ENCODE measurements at regions of chr21 and their contacts with region 1.

Region 1: GRCh38 chr21:17679002-17679600 is 66.4 kb upstream of the BTG3 start:
- DNase-seq: peak; percentile 37
- H3K4me3 ChIP-seq: no peak overlapping the region
- H3K27ac ChIP-seq: no peak overlapping the region
- H3K4me1 ChIP-seq: no peaks in the 10 kb centered on the region
- H3K27me3 ChIP-seq: no peaks in the 10 kb centered on the region
- CTCF ChIP-seq: peak; percentile 35 to 94 (median 86)
- POLR2A ChIP-seq: no peak

Region 2: GRCh38 chr21:17903029-17903806 is 224.1 kb after region 1 on chr21:
- intact Hi-C with region 1: loop called (anchors 2 kb)
- DNase-seq: no peak
- H3K4me3 ChIP-seq: no peak overlapping the region
- H3K27ac ChIP-seq: no peak overlapping the region
- H3K4me1 ChIP-seq: no peaks in the 10 kb centered on the region
- H3K27me3 ChIP-seq: no peaks in the 10 kb centered on the region
- CTCF ChIP-seq: peak in 3 of 4 experiments; percentile 27 to 56 (median 41)
- POLR2A ChIP-seq: no peak

Region 3: GRCh38 chr21:17925000-17925610 is 246.0 kb after region 1 on chr21:
- intact Hi-C with region 1: loop called (anchors 2 kb)
- DNase-seq: peak; percentile 55
- H3K4me3 ChIP-seq: no peak overlapping the region
- H3K27ac ChIP-seq: no peak overlapping the region
- H3K4me1 ChIP-seq: no peaks in the 10 kb centered on the region
- H3K27me3 ChIP-seq: no peaks in the 10 kb centered on the region
- CTCF ChIP-seq: peak; percentile 46 to 73 (median 72)
- POLR2A ChIP-seq: no peak